ENCODE measurements at regions of chr2 and their contacts with region 1.

Region 1: DNA sequence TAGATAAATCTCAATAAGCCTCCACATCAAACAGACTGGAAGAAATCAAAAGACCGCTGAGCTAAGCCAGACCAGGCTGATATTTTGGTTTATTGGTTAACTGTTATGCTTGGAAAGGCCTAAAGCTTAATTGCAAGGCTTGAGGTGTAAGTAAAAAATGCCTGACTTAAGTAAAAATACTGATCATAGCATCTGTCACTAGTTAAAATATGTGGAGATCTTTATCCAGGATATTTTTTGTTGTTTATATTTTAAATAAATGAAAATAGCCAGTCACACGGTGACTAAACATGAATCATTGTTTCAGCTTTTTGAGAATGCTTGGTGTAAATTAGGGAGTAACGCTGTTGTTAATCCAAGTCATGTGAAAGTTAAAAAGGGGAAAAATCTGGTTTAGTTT is 127.9 kb downstream of the THADA start:
- DNase-seq: peak in 1 of 2 experiments; percentile 96
- H3K4me3 ChIP-seq: 0 out of 2 replicates have a peak overlapping the region, but pooled peaks have one; percentile 9
- H3K27ac ChIP-seq: peak overlapping the region; percentile 89
- H3K4me1 ChIP-seq: peaks cover 64% of the 10 kb centered on the region
- H3K27me3 ChIP-seq: no peaks in the 10 kb centered on the region
- CTCF ChIP-seq: no peak

Region 2: DNA sequence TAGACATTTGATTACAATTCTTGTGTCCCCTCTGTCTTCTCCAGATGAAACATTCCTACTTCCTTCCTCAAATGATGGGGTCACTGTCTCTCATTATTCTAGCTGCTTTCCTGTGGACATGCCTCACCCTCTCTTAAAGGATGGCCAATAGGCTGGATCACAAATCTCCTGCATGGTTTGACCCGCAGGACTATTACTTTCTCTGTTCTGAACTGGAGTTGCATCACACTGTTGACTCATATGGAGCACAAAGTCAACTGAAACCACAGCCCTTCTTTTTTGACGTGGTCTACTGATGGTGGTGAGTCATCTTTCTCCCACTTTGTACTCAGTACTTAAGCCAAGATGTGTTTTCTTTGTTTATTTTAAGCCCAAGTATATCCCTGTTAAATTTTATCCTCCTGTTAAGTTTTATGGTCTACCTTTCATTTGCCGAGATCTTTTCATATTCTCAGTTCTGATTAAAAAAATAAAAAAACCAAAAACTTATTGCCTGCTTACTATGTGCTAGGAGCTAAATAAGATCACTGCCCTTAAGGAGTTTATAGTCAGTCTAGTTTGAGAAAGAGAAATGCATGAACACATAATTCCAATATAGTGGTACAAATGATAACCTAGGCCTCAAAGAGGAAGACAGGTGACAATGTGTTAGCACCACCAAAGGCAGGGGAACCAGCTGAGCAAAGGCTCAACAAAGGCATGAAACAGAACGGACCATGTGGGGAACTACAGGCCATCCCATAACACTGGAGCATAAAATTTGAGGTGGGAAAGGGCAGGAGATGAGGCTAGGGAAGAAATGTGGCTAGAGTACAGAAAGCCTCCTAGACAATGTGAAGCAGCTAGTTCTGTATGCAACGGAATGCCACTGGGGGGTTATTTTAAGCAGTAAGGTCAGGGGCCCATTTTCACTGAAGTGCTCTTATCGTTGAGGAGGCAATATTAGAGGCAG is 173.9 kb before region 1 on chr2:
- CTCF ChIA-PET with region 1: no interaction called
- POLR2A ChIA-PET with region 1: no interaction called
- intact Hi-C with region 1: loop called (anchors 5 kb)
- DNase-seq: peak; percentile 54 to 96
- H3K4me3 ChIP-seq: no peak overlapping the region
- H3K27ac ChIP-seq: peak overlapping the region; percentile 87
- H3K4me1 ChIP-seq: peaks cover 25% of the 10 kb centered on the region
- H3K27me3 ChIP-seq: no peaks in the 10 kb centered on the region
- CTCF ChIP-seq: no peak

Region 3: GRCh38 chr2:43305517-43305916 is 162.4 kb before region 1 on chr2:
- CTCF ChIA-PET with region 1: no interaction called
- POLR2A ChIA-PET with region 1: no interaction called
- intact Hi-C with region 1: loop called (anchors 2 kb)
- DNase-seq: no peak
- H3K4me3 ChIP-seq: no peak overlapping the region
- H3K27ac ChIP-seq: peak overlapping the region; percentile 63
- H3K4me1 ChIP-seq: peaks cover 38% of the 10 kb centered on the region
- H3K27me3 ChIP-seq: no peaks in the 10 kb centered on the region
- CTCF ChIP-seq: no peak

Measured in PC-9 (cell line).